ENCODE measurements at regions of chr5 and their contacts with region 1.

Region 1: GRCh38 chr5:58460732-58461286 is 923 bp upstream of the PLK2 start:
- DNase-seq: peak; percentile 96
- H3K4me3 ChIP-seq: peak overlapping the region; percentile 78 to 83
- H3K27ac ChIP-seq: peak overlapping the region; percentile 82 to 95
- H3K4me1 ChIP-seq: no peaks in the 10 kb centered on the region
- H3K27me3 ChIP-seq: no peaks in the 10 kb centered on the region
- CTCF ChIP-seq: peak; percentile 32 to 83 (median 64)
- POLR2A ChIP-seq: no peak

Region 2: DNA sequence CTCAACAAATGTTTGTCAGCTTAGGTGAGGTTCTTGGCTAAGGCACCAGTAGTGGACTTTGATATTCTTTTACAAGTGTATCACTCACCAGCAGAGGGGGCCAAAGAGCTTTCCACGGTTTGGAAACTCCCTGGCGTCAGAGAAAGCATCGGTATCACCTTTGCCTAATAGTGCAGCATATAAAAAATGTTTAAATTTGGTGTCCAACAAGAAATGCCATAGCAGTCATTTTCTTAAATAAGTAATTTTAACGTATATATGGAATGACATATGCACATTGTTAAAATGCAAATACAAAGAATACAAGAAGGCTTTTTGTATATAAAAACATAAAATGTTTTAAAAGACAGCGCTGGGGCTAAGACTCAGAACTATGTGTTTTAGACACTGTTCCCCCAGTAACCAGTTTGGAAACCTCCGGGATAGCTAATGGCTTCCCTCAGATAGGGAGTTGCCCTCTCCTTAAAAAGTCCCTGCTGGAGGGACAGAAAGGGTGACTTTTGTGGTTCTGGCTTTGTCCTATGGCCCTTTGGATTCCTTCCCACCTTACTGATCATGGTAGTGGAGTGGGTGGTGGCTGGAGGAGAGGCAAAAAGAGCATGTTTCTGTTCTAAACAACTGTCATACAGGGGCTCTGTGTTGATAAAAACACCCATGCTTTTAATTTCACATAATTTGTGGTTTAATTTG is 1162.4 kb before region 1 on chr5:
- intact Hi-C with region 1: loop called (anchors 5 kb)
- DNase-seq: peak; percentile 93
- H3K4me3 ChIP-seq: peak overlapping the region; percentile 16 to 40
- H3K27ac ChIP-seq: no peak overlapping the region
- H3K4me1 ChIP-seq: no peaks in the 10 kb centered on the region
- H3K27me3 ChIP-seq: no peaks in the 10 kb centered on the region
- CTCF ChIP-seq: peak; percentile 76 to 91 (median 83)
- POLR2A ChIP-seq: no peak

Region 3: GRCh38 chr5:57505272-57506200 is 955.3 kb before region 1 on chr5:
- intact Hi-C with region 1: loop called (anchors 5 kb)
- DNase-seq: no peak
- H3K4me3 ChIP-seq: no peak overlapping the region
- H3K27ac ChIP-seq: no peak overlapping the region
- H3K4me1 ChIP-seq: no peaks in the 10 kb centered on the region
- H3K27me3 ChIP-seq: no peaks in the 10 kb centered on the region
- CTCF ChIP-seq: no peak
- POLR2A ChIP-seq: no peak

Region 4: DNA sequence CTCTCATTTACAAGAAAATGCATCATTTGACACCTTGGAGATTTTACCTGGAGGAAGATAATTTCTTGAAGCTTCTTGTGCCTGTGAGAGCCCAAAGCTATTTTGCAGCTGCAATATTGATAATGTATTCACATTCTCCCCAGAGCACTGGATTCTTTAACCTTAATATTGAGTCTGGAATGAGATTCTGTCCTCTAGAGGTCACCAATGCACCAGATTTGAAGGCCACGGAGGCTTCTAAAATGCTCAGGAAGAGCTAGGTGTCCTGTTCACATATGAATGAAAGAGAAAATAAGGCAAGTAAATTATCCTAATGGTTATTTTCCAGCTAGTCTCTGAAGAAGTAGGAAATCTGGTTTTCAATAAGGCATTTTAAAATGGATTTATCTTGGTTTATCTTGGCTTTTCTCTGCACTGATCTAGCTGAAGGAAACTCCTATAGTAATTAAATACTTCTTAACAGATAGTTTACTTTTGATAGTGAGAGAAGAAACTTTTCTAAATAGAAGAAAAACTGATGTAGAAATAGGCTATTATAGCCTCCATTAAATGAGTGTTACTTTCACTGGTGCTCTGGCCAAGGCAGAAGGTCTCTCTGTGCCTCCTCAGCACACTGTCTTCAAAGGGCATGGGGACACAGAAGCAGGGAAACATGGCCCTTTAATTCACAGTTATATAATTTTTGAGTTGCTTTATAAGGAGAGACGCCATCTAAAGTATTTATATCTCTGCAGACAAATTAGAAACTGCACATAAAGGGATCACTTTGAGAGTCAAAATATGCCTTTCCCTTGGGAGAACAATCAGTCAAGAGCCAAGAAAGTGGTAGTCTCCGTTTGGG is 681.2 kb before region 1 on chr5:
- intact Hi-C with region 1: loop called (anchors 5 kb)
- DNase-seq: peak; percentile 57
- H3K4me3 ChIP-seq: no peak overlapping the region
- H3K27ac ChIP-seq: no peak overlapping the region
- H3K4me1 ChIP-seq: no peaks in the 10 kb centered on the region
- H3K27me3 ChIP-seq: no peaks in the 10 kb centered on the region
- CTCF ChIP-seq: peak; percentile 26 to 48 (median 26)
- POLR2A ChIP-seq: no peak

Region 5: GRCh38 chr5:58040044-58040443 is 420.8 kb before region 1 on chr5:
- intact Hi-C with region 1: no loop called
- DNase-seq: no peak
- H3K4me3 ChIP-seq: no peak overlapping the region
- H3K27ac ChIP-seq: no peak overlapping the region
- H3K4me1 ChIP-seq: no peaks in the 10 kb centered on the region
- H3K27me3 ChIP-seq: no peaks in the 10 kb centered on the region
- CTCF ChIP-seq: no peak
- POLR2A ChIP-seq: no peak

Region 6: DNA sequence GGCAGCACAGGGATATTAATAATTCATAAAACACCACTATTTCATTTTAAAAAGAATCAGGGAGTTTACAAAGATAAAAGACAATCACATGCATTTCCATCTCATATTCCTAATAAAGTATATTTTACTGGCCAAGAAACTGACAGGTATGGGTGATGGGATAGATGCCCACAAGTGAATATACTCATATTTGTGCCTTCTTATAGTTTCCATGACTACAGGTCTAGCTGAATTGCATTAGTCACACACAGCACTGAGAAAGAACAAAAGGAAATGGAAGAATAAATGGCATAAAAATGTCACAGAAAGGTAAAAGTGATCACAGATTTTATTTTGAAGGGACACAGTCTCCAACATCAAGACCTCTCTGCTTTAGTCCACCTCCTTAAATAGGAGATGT is 194.4 kb before region 1 on chr5:
- intact Hi-C with region 1: no loop called
- DNase-seq: no peak
- H3K4me3 ChIP-seq: no peak overlapping the region
- H3K27ac ChIP-seq: no peak overlapping the region
- H3K4me1 ChIP-seq: no peaks in the 10 kb centered on the region
- H3K27me3 ChIP-seq: no peaks in the 10 kb centered on the region
- CTCF ChIP-seq: no peak
- POLR2A ChIP-seq: no peak